Heart left ventricle (tissue), 16 donors: ENCODE measurements at regions of chr15 and their contacts with region 1.

Region 1: DNA sequence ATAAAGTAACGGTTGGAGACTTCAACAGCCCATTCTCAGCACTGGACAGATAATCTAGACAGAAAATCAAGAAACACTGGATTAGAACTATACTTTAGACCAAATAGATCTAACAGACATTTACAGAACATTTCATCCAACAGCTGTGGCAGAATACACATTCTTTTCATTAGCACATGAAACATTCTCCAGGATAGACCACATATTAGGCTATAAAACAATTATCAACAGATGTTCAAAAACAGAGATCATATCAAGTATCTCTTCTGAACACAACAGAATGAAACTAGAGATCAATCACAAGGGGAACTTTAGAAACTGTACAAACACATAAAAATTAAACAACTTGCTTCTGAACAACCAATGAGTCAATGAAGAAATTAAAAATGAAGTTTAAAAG is 133.3 kb downstream of the ADAM10 start:
- DNase-seq: no peak
- ATAC-seq: no peak
- H3K4me3 ChIP-seq: no peak overlapping the region
- H3K27ac ChIP-seq: no peak overlapping the region
- H3K4me1 ChIP-seq: no peaks in the 10 kb centered on the region
- H3K27me3 ChIP-seq: no peaks in the 10 kb centered on the region
- CTCF ChIP-seq: no peak
- POLR2A ChIP-seq: no peak

Region 2: DNA sequence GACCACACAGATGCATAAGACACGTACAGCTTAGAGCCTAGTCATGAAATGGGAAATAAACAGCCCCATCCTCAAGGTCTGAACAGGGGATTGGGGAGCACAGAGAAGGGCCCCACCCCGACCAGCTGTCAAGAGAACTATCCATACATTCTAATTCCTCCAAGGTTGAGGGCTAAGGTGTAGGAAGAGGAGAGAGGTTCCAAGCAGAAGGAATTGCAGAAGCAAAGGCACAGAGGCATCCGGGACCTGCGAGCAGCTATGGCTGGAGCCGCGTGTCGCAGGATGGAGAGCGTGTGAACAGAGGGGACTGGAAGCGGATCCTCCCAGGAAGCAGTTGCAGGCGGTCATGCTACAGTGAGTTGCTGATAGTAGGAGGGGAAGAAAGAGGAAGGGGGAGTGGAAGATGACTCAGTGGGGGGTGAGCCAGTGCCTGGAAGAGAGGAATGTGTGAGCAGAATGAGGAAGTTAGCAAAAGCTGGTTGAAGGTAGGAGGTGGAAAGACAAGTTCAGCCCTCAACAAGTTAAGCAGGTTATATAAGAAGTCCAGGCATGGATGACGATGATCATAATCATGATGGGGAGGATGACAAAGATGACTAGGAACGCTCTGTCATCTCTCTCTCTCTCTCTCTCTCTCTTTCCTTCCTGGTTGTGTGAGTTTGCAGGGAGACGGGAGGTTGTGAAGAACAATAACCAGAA is 94.7 kb before region 1 on chr15:
- intact Hi-C with region 1: loop called in 1 of 10 experiments (anchors 5 kb)
- DNase-seq: peak in 3 of 5 donors; percentile 44 to 78 (median 66)
- ATAC-seq: peak in 3 of 4 donors; percentile 31 to 55 (median 35)
- H3K4me3 ChIP-seq: peak overlapping the region in 1 of 12 donors; percentile 4
- H3K27ac ChIP-seq: peak overlapping the region in 6 of 12 donors; percentile 5 to 82 (median 19)
- H3K4me1 ChIP-seq: peaks cover 3 to 94% (median 33%) of the 10 kb centered on the region in 12 donors
- H3K27me3 ChIP-seq: no peaks in the 10 kb centered on the region
- CTCF ChIP-seq: no peak
- POLR2A ChIP-seq: no peak